Naive thymus-derived CD4-positive, alpha-beta T cell (primary cell): ENCODE measurements at regions of chr9 and their contacts with region 1.

Region 1: GRCh38 chr9:100322954-100323536 is 29.7 kb downstream of the TEX10 start:
- DNase-seq: no peak
- ATAC-seq: no peak
- H3K4me3 ChIP-seq: no peak overlapping the region
- H3K4me3 Mint-ChIP-seq: no peak overlapping the region
- H3K27ac ChIP-seq: no peak overlapping the region
- H3K27ac Mint-ChIP-seq: peak overlapping the region in 2 of 9 donors; percentile 14 to 57
- H3K4me1 ChIP-seq: no peaks in the 10 kb centered on the region
- H3K4me1 Mint-ChIP-seq: peaks cover 0 to 27% (median 16%) of the 10 kb centered on the region in 7 donors
- H3K27me3 ChIP-seq: no peaks in the 10 kb centered on the region
- H3K27me3 Mint-ChIP-seq: no peaks in the 10 kb centered on the region

Region 2: DNA sequence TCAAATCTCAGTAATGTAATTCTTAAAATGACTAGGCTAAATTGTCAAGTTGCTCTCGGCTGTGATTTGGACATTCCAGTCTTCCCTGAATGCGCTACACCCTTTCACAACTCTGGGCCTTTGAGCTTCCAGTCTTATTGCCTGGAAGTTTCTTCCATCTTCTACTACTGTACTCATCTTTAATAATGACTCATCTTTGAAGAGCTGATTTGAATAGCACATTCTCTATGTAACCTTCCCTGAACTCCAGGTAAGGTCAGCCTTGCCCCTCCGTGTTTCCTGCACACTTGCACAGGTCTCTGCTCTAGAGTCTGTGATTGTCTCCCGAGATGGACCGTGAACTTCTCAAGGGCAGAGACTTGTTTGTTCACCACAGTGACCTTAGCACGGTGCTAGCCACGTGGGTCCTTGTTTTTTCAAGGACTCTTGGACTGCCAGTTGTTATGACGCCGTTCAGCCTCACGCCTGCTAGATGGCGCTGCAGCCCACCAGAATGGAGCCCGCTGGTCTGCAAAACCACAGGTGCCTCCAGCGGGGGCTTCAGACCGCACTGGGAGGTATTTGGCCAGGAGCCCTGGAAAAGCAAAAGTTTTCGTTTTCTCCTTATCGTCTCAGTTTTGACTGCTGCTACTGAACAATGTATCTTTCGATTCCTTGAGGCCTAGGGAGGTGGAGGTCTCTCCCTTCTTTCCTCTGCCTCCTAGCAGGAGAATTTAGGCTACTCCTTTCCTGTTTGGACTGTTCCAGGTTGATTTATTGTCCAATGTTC is 1056.6 kb before region 1 on chr9:
- CTCF ChIA-PET with region 1: no interaction called
- POLR2A ChIA-PET with region 1: no interaction called
- intact Hi-C with region 1: loop called (anchors 2 to 5 kb)
- DNase-seq: peak; percentile 12 to 65 (median 34)
- ATAC-seq: peak; percentile 84
- H3K4me3 ChIP-seq: no peak overlapping the region
- H3K4me3 Mint-ChIP-seq: peak overlapping the region in 6 of 10 donors; percentile 1 to 42 (median 13)
- H3K27ac ChIP-seq: no peak overlapping the region
- H3K27ac Mint-ChIP-seq: peak overlapping the region in 1 of 9 donors; percentile 23
- H3K4me1 ChIP-seq: peaks cover 0 to 4% of the 10 kb centered on the region in 2 donors
- H3K4me1 Mint-ChIP-seq: peaks cover 0 to 13% (median 10%) of the 10 kb centered on the region in 7 donors
- H3K27me3 ChIP-seq: no peaks in the 10 kb centered on the region
- H3K27me3 Mint-ChIP-seq: peaks cover 0 to 14% (median 6%) of the 10 kb centered on the region in 5 donors

Region 3: DNA sequence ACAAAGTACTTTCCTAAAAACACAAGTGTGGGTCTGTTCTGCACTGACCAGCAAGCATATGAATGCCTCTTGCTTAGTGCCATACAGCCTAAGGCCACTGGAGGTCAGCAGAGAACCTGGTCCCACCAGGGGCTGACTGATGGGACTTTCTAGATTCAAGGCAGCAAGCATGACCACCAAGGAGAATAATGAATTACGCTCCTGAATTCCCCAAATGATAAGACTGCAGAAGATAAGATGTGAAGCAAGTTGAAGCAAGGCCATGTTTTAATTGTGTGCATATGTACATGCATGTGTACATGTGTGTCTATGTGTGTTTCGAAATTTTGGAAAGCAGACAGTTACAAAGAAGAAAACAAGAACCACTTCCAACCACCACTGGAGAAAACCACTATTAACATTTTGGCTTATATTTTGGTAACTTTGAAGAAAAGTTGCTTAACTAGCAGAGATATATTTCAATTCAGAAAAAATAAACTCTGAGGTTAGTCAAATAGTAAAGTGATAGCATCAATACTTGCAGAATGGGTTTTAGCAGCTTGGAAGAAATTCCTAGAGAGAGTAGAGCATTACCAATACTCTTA is 294.8 kb before region 1 on chr9:
- CTCF ChIA-PET with region 1: interaction called, 5 read pairs
- POLR2A ChIA-PET with region 1: no interaction called
- intact Hi-C with region 1: loop called (anchors 1 kb)
- DNase-seq: peak; percentile 21 to 66 (median 45)
- ATAC-seq: peak; percentile 98
- H3K4me3 ChIP-seq: no peak overlapping the region
- H3K4me3 Mint-ChIP-seq: no peak overlapping the region
- H3K27ac ChIP-seq: no peak overlapping the region
- H3K27ac Mint-ChIP-seq: peak overlapping the region in 1 of 9 donors; percentile 0
- H3K4me1 ChIP-seq: no peaks in the 10 kb centered on the region
- H3K4me1 Mint-ChIP-seq: peaks cover 4 to 12% (median 9%) of the 10 kb centered on the region in 7 donors
- H3K27me3 ChIP-seq: no peaks in the 10 kb centered on the region
- H3K27me3 Mint-ChIP-seq: no peaks in the 10 kb centered on the region

Region 4: DNA sequence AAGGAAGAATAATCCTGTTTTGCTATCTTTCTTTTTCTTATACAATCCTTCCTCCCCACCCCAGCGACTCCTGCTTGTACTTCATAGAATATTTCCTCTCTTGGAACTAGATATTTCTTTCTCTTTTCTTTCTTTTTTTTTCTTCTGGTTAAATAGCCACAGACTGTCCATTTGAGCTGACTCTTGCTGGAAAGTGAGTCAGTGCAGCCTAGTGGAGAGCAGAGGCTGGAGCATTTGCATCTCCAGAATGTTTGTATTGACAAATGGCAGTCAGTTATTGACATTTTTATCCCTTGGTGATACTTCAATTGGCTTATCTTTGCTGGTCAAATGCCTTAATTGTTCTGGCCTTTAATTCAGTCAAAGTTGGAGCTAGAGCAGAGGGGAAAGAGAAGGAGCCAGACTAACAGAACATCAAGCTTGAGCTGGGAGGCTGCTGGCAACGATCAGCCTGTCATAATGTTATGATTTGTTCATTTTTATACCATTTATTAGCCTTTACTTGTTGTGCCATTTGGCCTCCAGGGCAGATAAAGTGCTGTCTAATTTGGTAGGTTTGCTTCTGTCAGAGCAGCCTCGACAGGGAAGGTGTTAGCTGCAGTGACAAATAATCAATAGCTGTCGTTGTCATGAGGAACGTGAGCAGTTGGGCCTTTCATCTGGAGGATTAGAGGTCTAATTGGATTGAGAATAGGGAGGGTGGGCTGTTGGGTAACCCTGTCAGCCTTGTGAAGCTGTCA is 155.0 kb before region 1 on chr9:
- CTCF ChIA-PET with region 1: no interaction called
- POLR2A ChIA-PET with region 1: no interaction called
- intact Hi-C with region 1: no loop called
- DNase-seq: no peak
- ATAC-seq: no peak
- H3K4me3 ChIP-seq: no peak overlapping the region
- H3K4me3 Mint-ChIP-seq: no peak overlapping the region
- H3K27ac ChIP-seq: no peak overlapping the region
- H3K27ac Mint-ChIP-seq: no peak overlapping the region
- H3K4me1 ChIP-seq: no peaks in the 10 kb centered on the region
- H3K4me1 Mint-ChIP-seq: peaks cover 0 to 4% (median 0%) of the 10 kb centered on the region in 7 donors
- H3K27me3 ChIP-seq: no peaks in the 10 kb centered on the region
- H3K27me3 Mint-ChIP-seq: no peaks in the 10 kb centered on the region

Region 5: GRCh38 chr9:100269656-100270055 is 53.4 kb before region 1 on chr9:
- CTCF ChIA-PET with region 1: no interaction called
- POLR2A ChIA-PET with region 1: no interaction called
- intact Hi-C with region 1: no loop called
- DNase-seq: no peak
- ATAC-seq: no peak
- H3K4me3 ChIP-seq: no peak overlapping the region
- H3K4me3 Mint-ChIP-seq: no peak overlapping the region
- H3K27ac ChIP-seq: no peak overlapping the region
- H3K27ac Mint-ChIP-seq: no peak overlapping the region
- H3K4me1 ChIP-seq: no peaks in the 10 kb centered on the region
- H3K4me1 Mint-ChIP-seq: peaks cover 0 to 2% (median 0%) of the 10 kb centered on the region in 7 donors
- H3K27me3 ChIP-seq: no peaks in the 10 kb centered on the region
- H3K27me3 Mint-ChIP-seq: no peaks in the 10 kb centered on the region

Region 6: GRCh38 chr9:100341889-100342288 is 18.8 kb after region 1 on chr9:
- CTCF ChIA-PET with region 1: interaction called, 3 read pairs
- POLR2A ChIA-PET with region 1: no interaction called
- intact Hi-C with region 1: loop called in 1 of 2 experiments (anchors 2 kb)
- DNase-seq: no peak
- ATAC-seq: no peak
- H3K4me3 ChIP-seq: no peak overlapping the region
- H3K4me3 Mint-ChIP-seq: no peak overlapping the region
- H3K27ac ChIP-seq: no peak overlapping the region
- H3K27ac Mint-ChIP-seq: peak overlapping the region in 2 of 9 donors; percentile 1
- H3K4me1 ChIP-seq: no peaks in the 10 kb centered on the region
- H3K4me1 Mint-ChIP-seq: peaks cover 13 to 63% (median 46%) of the 10 kb centered on the region in 7 donors
- H3K27me3 ChIP-seq: no peaks in the 10 kb centered on the region
- H3K27me3 Mint-ChIP-seq: no peaks in the 10 kb centered on the region

Region 7: GRCh38 chr9:100554935-100555401 is 231.9 kb after region 1 on chr9:
- CTCF ChIA-PET with region 1: no interaction called
- POLR2A ChIA-PET with region 1: no interaction called
- intact Hi-C with region 1: no loop called
- DNase-seq: no peak
- ATAC-seq: no peak
- H3K4me3 ChIP-seq: no peak overlapping the region
- H3K4me3 Mint-ChIP-seq: no peak overlapping the region
- H3K27ac ChIP-seq: no peak overlapping the region
- H3K27ac Mint-ChIP-seq: no peak overlapping the region
- H3K4me1 ChIP-seq: no peaks in the 10 kb centered on the region
- H3K4me1 Mint-ChIP-seq: no peaks in the 10 kb centered on the region
- H3K27me3 ChIP-seq: no peaks in the 10 kb centered on the region
- H3K27me3 Mint-ChIP-seq: no peaks in the 10 kb centered on the region